ENCODE measurements at regions of chr7 and their contacts with region 1.

Region 1: GRCh38 chr7:25894902-25895791 is 256.9 kb upstream of the NFE2L3 start:
- DNase-seq: peak; percentile 46 to 61
- H3K4me3 ChIP-seq: no peak overlapping the region
- H3K4me3 Mint-ChIP-seq: peak overlapping the region; percentile 49
- H3K27ac Mint-ChIP-seq: no peak overlapping the region
- H3K4me1 ChIP-seq: peaks cover 7% of the 10 kb centered on the region
- H3K4me1 Mint-ChIP-seq: peaks cover 8% of the 10 kb centered on the region
- H3K27me3 ChIP-seq: no peaks in the 10 kb centered on the region
- H3K27me3 Mint-ChIP-seq: peaks cover 6% of the 10 kb centered on the region
- CTCF ChIP-seq: peak; percentile 53 to 61

Region 2: DNA sequence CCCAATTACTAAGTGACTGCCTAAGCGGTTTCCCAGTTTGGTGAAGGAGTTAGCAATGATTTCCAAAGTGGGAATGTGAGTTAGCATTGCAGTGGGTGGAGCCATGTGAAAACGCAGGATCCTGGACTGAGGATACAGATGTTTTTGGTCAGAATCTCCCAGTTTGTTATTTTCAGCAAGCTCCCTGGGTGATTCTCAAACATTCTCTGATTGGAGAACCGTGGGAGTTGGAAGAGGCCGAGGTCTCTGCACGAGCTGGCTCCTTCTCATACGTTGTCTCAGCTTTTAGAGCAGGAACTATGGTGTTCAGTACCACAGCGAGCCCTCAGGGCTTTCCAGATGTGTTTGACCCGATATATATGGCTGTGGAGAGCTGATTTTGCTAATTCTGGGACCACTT is 270.3 kb before region 1 on chr7:
- CTCF ChIA-PET with region 1: no interaction called
- POLR2A ChIA-PET with region 1: no interaction called
- intact Hi-C with region 1: no loop called
- DNase-seq: no peak
- H3K4me3 ChIP-seq: no peak overlapping the region
- H3K4me3 Mint-ChIP-seq: no peak overlapping the region
- H3K27ac Mint-ChIP-seq: no peak overlapping the region
- H3K4me1 ChIP-seq: no peaks in the 10 kb centered on the region
- H3K4me1 Mint-ChIP-seq: no peaks in the 10 kb centered on the region
- H3K27me3 ChIP-seq: no peaks in the 10 kb centered on the region
- H3K27me3 Mint-ChIP-seq: peaks cover 8% of the 10 kb centered on the region
- CTCF ChIP-seq: no peak

Region 3: GRCh38 chr7:25996006-25996408 is 100.9 kb after region 1 on chr7:
- CTCF ChIA-PET with region 1: interaction called, 4 read pairs
- POLR2A ChIA-PET with region 1: no interaction called
- intact Hi-C with region 1: loop called (anchors 2 kb)
- DNase-seq: peak; percentile 71 to 72
- H3K4me3 ChIP-seq: no peak overlapping the region
- H3K4me3 Mint-ChIP-seq: peak overlapping the region; percentile 17
- H3K27ac Mint-ChIP-seq: peak overlapping the region; percentile 65
- H3K4me1 ChIP-seq: peaks cover 33% of the 10 kb centered on the region
- H3K4me1 Mint-ChIP-seq: peaks cover 24% of the 10 kb centered on the region
- H3K27me3 ChIP-seq: no peaks in the 10 kb centered on the region
- H3K27me3 Mint-ChIP-seq: no peaks in the 10 kb centered on the region
- CTCF ChIP-seq: peak; percentile 47 to 68

Region 4: GRCh38 chr7:26083113-26083512 is 188.0 kb after region 1 on chr7:
- CTCF ChIA-PET with region 1: interaction called, 3 read pairs
- POLR2A ChIA-PET with region 1: no interaction called
- intact Hi-C with region 1: loop called (anchors 5 kb)
- DNase-seq: no peak
- H3K4me3 ChIP-seq: no peak overlapping the region
- H3K4me3 Mint-ChIP-seq: no peak overlapping the region
- H3K27ac Mint-ChIP-seq: no peak overlapping the region
- H3K4me1 ChIP-seq: peaks cover 62% of the 10 kb centered on the region
- H3K4me1 Mint-ChIP-seq: peaks cover 50% of the 10 kb centered on the region
- H3K27me3 ChIP-seq: no peaks in the 10 kb centered on the region
- H3K27me3 Mint-ChIP-seq: no peaks in the 10 kb centered on the region
- CTCF ChIP-seq: no peak

Region 5: GRCh38 chr7:26284995-26285632 is 390.0 kb after region 1 on chr7:
- CTCF ChIA-PET with region 1: no interaction called
- POLR2A ChIA-PET with region 1: no interaction called
- intact Hi-C with region 1: loop called (anchors 2 kb)
- DNase-seq: peak in 1 of 2 experiments; percentile 55
- H3K4me3 ChIP-seq: no peak overlapping the region
- H3K4me3 Mint-ChIP-seq: no peak overlapping the region
- H3K27ac Mint-ChIP-seq: no peak overlapping the region
- H3K4me1 ChIP-seq: no peaks in the 10 kb centered on the region
- H3K4me1 Mint-ChIP-seq: no peaks in the 10 kb centered on the region
- H3K27me3 ChIP-seq: no peaks in the 10 kb centered on the region
- H3K27me3 Mint-ChIP-seq: no peaks in the 10 kb centered on the region
- CTCF ChIP-seq: peak; percentile 35 to 43

Region 6: GRCh38 chr7:26500749-26501352 is 605.7 kb after region 1 on chr7:
- CTCF ChIA-PET with region 1: no interaction called
- POLR2A ChIA-PET with region 1: no interaction called
- intact Hi-C with region 1: loop called (anchors 5 kb)
- DNase-seq: peak in 1 of 2 experiments; percentile 13
- H3K4me3 ChIP-seq: no peak overlapping the region
- H3K4me3 Mint-ChIP-seq: no peak overlapping the region
- H3K27ac Mint-ChIP-seq: no peak overlapping the region
- H3K4me1 ChIP-seq: no peaks in the 10 kb centered on the region
- H3K4me1 Mint-ChIP-seq: no peaks in the 10 kb centered on the region
- H3K27me3 ChIP-seq: no peaks in the 10 kb centered on the region; the same call in 1 of the 2 replicates
- H3K27me3 Mint-ChIP-seq: peaks cover 14% of the 10 kb centered on the region
- CTCF ChIP-seq: peak; percentile 61 to 65

Region 7: DNA sequence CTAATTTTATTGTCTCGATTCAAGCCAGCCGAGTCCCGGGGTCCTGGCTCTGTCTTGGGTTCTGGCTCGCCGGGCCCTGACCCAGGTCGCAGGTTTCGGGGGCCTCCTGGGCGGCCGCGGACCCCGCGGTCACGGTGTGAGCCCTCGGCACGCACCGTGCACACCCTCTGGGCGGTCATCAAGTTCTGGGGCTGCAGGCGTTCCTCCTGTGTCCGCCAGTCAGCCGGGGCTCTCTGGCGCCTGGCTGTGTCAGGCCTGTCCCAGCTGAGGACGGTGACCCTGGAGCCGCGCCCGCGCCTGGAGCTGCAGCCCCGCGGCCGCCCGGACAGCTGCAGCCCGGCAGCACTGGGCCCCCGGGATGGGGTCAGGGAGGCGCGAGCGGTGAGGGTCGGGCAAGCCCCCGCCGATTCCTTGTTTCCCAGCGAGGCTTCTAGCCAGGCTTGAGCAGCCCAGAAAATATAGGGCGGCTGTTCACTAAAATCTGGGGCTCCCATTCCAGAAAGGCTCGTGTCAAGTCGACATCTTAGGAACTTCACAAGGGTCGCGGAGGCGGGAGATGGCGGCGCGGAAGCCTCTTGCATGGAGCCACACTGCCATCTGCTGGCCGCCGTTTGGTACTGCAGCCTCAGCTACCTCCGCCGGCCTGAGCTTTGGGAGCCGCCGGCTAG is 1265.5 kb after region 1 on chr7:
- CTCF ChIA-PET with region 1: no interaction called
- POLR2A ChIA-PET with region 1: no interaction called
- intact Hi-C with region 1: loop called (anchors 2 kb)
- DNase-seq: peak; percentile 84 to 93
- H3K4me3 ChIP-seq: peak overlapping the region; percentile 73
- H3K4me3 Mint-ChIP-seq: peak overlapping the region; percentile 77
- H3K27ac Mint-ChIP-seq: no peak overlapping the region
- H3K4me1 ChIP-seq: peaks cover 7% of the 10 kb centered on the region
- H3K4me1 Mint-ChIP-seq: peaks cover 14% of the 10 kb centered on the region
- H3K27me3 ChIP-seq: no peaks in the 10 kb centered on the region
- H3K27me3 Mint-ChIP-seq: no peaks in the 10 kb centered on the region
- CTCF ChIP-seq: peak; percentile 94 to 98

Measured in Caco-2 (cell line).